Common myeloid progenitor, CD34-positive (primary cell): ENCODE measurements at regions of chr19 and their contacts with region 1.

Region 1: DNA sequence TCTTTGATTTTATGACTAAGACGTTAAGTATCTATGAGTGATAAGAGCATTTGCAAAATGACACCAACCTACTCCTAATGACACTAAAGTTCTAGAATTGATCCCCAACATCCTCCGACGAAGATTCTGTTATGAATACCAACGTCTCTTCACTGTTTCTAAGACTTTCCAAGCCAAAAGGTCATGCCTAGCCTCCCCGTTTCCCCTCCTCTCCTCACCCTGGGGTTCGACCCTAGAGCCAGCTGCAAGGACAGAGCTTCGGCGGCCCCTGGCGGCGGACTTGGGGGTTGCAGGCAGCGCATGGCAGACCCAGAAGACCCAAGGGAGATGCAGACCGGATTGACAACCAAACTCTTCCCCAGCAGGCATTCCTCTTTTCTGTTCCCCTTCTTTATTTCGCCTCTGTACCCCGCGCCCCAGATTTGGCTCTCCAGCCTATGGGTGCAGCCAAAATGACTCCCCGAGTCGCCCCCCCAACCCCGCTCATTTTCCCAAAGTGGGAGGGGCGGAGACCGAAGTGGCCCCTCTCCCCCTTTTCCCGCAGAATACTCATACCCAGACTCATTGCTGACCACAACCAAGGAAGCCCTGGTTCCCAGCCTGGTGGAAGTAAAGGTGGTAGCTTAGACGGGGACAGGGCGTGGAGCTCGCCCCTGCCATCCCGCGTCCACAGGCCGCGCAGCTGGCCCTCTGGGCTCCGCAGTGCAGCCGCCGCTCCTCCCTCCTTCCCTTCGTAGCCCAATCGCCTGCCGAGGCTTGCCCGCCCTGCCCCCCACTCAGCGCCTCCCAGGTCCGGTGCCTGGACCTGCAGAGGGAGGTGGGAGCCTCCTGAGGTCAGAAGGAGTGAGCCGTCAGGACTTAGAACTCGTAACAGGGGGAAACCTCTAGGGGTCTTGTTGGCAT is 4.1 kb upstream of the EML2 start:
- DNase-seq: peak; percentile 86 to 88 (median 86)
- H3K4me3 ChIP-seq: peak overlapping the region in 3 of 7 experiments; percentile 4 to 12 (median 11)
- H3K27ac ChIP-seq: no peak overlapping the region
- H3K4me1 ChIP-seq: peaks cover 4 to 51% (median 47%) of the 10 kb centered on the region in 4 experiments
- H3K27me3 ChIP-seq: peaks cover 0 to 24% (median 10%) of the 10 kb centered on the region in 5 experiments

Region 2: GRCh38 chr19:45506246-45506990 is 136.9 kb before region 1 on chr19:
- CTCF ChIA-PET with region 1: no interaction called
- POLR2A ChIA-PET with region 1: no interaction called
- DNase-seq: peak; percentile 92 to 97 (median 96)
- H3K4me3 ChIP-seq: peak overlapping the region; percentile 28 to 97 (median 92)
- H3K27ac ChIP-seq: peak overlapping the region; percentile 64 to 86
- H3K4me1 ChIP-seq: peaks cover 5 to 51% (median 34%) of the 10 kb centered on the region in 4 experiments
- H3K27me3 ChIP-seq: peaks cover 0 to 2% (median 0%) of the 10 kb centered on the region in 5 experiments

Region 3: DNA sequence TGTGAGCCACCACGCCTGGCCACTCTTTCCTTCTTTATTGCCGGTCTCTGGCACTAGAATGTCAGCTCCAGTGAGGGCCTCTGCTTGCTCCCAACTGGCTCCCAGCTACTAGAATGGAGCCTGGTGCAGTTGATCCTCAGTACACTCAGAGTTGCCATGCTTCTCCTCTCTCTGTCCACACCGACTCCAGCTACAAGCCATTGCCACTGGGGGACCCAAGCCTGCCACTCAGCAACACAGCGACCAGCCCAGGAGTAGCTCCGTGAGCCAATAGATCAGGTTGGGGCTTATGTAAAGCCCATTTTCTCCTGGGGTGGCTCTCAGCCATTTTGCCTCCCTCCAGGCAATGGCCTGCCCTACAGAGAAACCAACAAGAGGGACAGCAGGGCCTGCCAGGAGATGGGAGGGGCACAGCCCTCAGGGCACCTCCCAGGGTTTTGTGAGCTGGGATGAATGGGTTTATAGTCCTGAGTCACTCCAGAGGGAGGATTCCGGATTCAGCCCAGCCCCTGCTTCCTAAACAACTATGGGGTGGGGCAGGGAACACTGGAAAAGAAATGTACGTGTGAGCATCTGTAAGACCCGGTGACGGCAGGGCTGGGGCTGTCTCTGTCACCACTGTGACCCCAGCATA is 95.2 kb before region 1 on chr19:
- CTCF ChIA-PET with region 1: no interaction called
- POLR2A ChIA-PET with region 1: no interaction called
- DNase-seq: no peak
- H3K4me3 ChIP-seq: no peak overlapping the region
- H3K27ac ChIP-seq: no peak overlapping the region
- H3K4me1 ChIP-seq: peaks cover 5 to 20% (median 11%) of the 10 kb centered on the region in 4 experiments
- H3K27me3 ChIP-seq: no peaks in the 10 kb centered on the region

Region 4: DNA sequence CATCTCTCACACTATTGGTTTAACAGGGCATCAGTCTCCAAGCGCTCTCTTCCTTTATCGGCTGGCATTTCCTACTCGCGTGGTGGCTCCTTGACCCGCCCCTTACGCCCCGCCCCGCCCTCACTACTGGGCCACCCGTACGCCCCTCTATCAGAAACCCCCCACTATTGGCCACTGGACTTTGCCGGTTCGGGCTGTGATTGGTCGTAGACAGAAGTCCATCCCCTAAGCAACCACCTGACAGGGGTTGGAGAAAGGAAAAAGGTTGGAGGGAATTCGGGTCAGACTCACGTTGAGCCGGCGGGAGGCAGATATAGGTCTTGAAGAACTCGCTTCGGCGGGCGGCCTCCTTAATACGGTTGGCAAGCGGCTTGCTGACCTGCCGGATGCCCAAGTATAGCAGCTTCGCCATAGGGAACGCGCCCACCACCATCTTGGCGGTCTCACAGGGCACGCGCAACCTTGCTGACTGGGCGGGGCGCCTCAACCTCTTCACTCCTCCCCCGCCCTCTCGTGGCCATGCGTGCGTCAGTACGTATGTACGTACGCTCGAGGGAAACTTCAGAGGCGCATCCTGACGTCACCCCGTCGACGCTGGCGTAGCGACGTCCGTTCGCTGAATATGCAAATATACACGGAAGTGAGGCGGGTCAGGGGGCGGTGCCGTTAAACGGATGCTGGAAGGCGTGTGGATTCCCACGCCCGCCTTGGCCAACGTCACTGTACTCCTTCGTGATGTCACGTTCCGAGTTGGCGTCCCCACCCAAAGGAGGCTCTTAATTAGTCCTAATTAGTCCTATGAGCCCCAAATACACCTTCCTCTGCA is 58.7 kb before region 1 on chr19 and contains the start of gene OPA3:
- CTCF ChIA-PET with region 1: interaction called, 12 read pairs
- POLR2A ChIA-PET with region 1: interaction called, 5 read pairs
- DNase-seq: peak; percentile 100
- H3K4me3 ChIP-seq: peak within 1 kb of the TSS; percentile 68 to 99 (median 92)
- H3K27ac ChIP-seq: peak within 1 kb of the TSS; percentile 92 to 96
- H3K4me1 ChIP-seq: peaks cover 0 to 12% (median 11%) of the 10 kb centered on the region in 4 experiments
- H3K27me3 ChIP-seq: no peaks in the 10 kb centered on the region

Region 5: GRCh38 chr19:45591004-45591637 is 52.2 kb before region 1 on chr19:
- CTCF ChIA-PET with region 1: interaction called, 21 read pairs
- POLR2A ChIA-PET with region 1: no interaction called
- DNase-seq: peak; percentile 36 to 56 (median 48)
- H3K4me3 ChIP-seq: no peak overlapping the region
- H3K27ac ChIP-seq: no peak overlapping the region
- H3K4me1 ChIP-seq: peaks cover 0 to 3% (median 1%) of the 10 kb centered on the region in 4 experiments
- H3K27me3 ChIP-seq: peaks cover 0 to 32% (median 2%) of the 10 kb centered on the region in 5 experiments

Region 6: DNA sequence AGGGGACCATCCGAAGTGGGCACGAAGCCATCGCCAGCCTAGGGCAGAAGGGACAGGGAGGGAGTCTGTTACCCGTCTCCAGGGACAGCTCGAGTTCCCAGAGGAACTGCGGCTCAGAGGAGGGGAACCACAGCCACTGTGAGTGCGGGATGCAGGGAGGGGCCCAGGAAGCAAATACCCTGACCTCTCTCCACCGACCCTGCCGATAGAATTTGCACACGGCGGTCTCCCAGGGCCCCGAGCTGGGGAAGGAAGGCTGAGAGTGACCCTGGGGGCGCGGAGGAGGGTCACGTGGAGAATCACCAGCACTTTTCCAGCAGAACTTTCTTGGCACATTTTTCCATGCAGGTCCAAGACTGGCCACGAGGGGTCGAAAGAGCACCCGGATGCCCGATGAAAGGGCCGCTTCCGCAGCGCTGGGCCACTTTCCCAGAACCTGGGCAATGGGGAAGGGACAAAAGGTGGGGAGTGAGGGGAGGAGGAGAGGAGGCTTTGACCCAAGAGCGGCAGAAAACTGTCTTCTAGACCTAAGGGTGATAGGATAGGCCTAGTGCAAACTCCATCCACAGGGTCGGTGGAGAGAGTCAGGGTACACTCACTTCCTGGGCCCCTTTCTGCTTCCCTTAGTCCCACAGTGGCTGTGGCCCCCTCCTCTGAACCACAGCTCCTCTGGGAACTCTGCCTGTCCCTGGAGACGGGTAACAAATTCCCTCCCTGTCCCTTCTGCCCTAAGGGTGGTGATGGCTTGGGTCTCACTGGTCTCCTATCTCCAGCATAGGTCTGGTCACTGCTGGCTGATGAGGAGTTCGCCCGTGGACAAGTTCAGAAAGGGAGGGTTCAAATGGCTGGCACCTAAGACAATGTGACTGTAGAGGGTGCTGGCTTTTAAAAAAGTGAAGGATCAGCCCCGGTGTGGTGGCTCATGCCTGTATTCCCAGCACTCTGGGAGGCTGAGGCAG is 35.9 kb before region 1 on chr19:
- CTCF ChIA-PET with region 1: interaction called, 41 read pairs
- POLR2A ChIA-PET with region 1: no interaction called
- DNase-seq: no peak
- H3K4me3 ChIP-seq: peak overlapping the region in 3 of 7 experiments; percentile 27 to 61 (median 44)
- H3K27ac ChIP-seq: no peak overlapping the region
- H3K4me1 ChIP-seq: peaks cover 0 to 9% (median 8%) of the 10 kb centered on the region in 4 experiments
- H3K27me3 ChIP-seq: peaks cover 0 to 17% (median 7%) of the 10 kb centered on the region in 5 experiments

Region 7: DNA sequence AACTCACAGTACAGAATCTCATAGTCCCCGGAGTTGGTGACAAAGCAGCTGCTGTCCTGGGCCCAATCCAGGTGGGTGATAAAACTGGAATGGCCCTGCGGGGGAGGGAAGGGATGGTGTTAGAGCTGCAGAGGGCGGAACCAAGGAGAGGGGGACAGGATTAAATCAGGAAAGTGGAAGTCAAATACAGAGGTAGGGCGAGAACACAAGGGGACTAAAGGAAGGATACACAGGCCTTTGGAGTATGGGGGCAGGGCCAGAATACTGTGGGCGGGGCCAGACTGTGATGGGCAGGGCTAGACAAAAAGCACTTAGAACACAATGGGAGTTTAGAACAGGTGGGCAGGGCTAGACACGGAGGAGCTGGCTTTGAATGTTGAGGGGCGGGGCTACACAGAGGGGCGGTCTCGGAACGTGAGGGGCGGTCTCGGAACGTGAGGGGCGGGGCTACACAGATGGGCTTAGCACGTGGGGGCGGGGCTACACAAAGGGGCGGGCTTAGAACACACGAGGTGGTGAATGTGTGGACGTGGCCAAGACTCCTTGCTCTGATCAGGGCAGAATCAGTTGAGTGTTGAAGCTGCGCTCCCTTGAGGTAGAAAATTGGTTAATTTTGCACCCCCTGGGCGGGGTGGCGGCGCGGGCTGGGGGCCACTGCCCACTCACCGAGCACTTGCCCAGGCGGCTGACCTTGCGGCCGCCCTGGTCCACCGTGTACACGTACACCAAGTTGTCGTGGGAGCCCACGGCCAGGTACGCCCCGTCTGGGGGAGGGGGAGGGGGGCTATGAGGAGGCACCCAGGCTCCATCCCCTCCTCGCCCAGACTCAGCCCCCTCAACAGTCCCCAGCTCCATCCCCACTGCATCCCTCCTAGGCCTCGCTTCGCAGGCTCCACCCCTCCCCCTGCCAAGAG is 27.2 kb before region 1 on chr19:
- CTCF ChIA-PET with region 1: interaction called, 19 read pairs
- POLR2A ChIA-PET with region 1: no interaction called
- DNase-seq: peak; percentile 81 to 92 (median 89)
- H3K4me3 ChIP-seq: no peak overlapping the region
- H3K27ac ChIP-seq: no peak overlapping the region
- H3K4me1 ChIP-seq: no peaks in the 10 kb centered on the region
- H3K27me3 ChIP-seq: no peaks in the 10 kb centered on the region